IMR-90 (cell line): ENCODE measurements at regions of chr6 and their contacts with region 1.

Region 1: GRCh38 chr6:43570876-43571441 is 4.9 kb downstream of the XPO5 start:
- DNase-seq: peak; percentile 47
- ATAC-seq: no peak
- H3K4me3 ChIP-seq: no peak overlapping the region
- H3K27ac ChIP-seq: no peak overlapping the region
- H3K4me1 ChIP-seq: no peaks in the 10 kb centered on the region
- H3K27me3 ChIP-seq: no peaks in the 10 kb centered on the region
- CTCF ChIP-seq: no peak
- POLR2A ChIP-seq: no peak
- RAD21 ChIP-seq: no peak

Region 2: DNA sequence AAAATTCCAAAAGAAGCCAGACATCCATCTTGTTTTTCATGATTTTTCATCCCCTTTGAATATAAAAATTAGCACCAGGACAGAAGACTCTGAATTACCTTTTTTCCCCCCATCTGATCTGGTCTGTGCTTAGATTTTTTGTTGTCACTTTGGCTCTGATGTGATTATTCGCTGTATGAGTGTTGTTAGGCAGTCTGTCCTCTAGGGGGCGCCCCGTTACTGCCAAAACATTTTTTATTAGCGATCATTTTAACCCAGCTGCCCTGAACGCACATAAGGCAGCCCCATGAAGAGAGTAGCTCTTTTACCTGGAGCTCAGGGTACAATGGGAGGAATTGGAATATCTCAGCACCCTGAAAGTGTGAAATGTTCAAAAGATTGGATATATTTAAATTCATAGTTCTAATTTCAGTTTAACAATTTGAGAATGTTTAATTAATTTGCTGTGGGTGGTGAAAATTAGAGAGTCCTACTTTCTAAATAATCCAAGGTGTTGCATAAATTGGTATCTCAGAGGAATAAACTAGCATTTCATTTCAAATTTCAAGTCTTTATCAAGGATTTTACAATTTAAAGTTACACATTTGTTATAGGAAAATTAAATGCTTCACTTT is 909.3 kb before region 1 on chr6:
- CTCF ChIA-PET with region 1: no interaction called
- POLR2A ChIA-PET with region 1: no interaction called
- dilution Hi-C with region 1: no loop called
- in situ Hi-C with region 1: loop called (anchors 25 kb)
- intact Hi-C with region 1: no loop called
- DNase-seq: peak; percentile 62
- ATAC-seq: peak; percentile 94
- H3K4me3 ChIP-seq: no peak overlapping the region
- H3K27ac ChIP-seq: no peak overlapping the region
- H3K4me1 ChIP-seq: no peaks in the 10 kb centered on the region
- H3K27me3 ChIP-seq: no peaks in the 10 kb centered on the region
- CTCF ChIP-seq: peak; percentile 87
- POLR2A ChIP-seq: 0 out of 2 replicates have a peak, but pooled peaks have one; percentile 29
- RAD21 ChIP-seq: peak; percentile 88

Region 3: DNA sequence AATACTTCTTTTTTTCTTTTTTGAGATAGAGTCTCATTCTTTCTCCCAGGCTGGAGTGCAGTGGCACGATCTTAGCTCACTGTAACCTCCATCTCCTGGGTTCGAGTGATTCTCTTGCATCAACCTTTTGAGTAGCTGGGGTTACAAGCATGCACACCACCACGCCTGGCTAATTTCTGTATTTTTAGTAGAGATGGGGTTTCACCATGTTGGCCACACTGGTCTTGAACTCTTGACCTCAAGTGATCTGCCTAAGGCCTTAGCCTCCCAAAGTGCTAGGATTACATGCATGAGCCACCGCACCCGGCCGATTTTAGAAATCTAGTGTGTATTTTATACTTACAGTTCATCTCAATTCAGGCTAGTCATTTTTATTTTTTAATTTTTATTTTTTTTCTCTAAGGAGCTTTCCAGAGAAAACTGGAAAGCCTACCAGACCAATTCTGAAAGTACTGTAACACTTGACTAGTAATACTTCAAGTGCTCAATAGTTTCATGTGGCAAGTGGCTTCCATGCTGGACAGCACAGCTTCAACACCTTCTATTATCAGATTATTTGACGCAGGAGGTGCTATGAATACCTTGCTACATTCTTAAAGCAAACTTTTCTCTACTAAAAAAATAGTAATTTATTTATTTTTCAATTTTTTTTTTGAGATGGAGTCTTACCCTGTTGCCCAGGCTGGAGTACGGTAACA is 29.0 kb before region 1 on chr6:
- CTCF ChIA-PET with region 1: interaction called, 5 read pairs
- POLR2A ChIA-PET with region 1: no interaction called
- dilution Hi-C with region 1: no loop called
- in situ Hi-C with region 1: no loop called
- intact Hi-C with region 1: loop called (anchors 5 kb)
- DNase-seq: no peak
- ATAC-seq: no peak
- H3K4me3 ChIP-seq: no peak overlapping the region
- H3K27ac ChIP-seq: no peak overlapping the region
- H3K4me1 ChIP-seq: no peaks in the 10 kb centered on the region
- H3K27me3 ChIP-seq: no peaks in the 10 kb centered on the region
- CTCF ChIP-seq: no peak
- POLR2A ChIP-seq: no peak
- RAD21 ChIP-seq: no peak